Cardiac septum (tissue), 1 donor: ENCODE measurements at regions of chr4 and their contacts with region 1.

Region 1: GRCh38 chr4:123340381-123340701 is 56.3 kb upstream of the SPRY1 start:
- DNase-seq: no peak

Region 2: DNA sequence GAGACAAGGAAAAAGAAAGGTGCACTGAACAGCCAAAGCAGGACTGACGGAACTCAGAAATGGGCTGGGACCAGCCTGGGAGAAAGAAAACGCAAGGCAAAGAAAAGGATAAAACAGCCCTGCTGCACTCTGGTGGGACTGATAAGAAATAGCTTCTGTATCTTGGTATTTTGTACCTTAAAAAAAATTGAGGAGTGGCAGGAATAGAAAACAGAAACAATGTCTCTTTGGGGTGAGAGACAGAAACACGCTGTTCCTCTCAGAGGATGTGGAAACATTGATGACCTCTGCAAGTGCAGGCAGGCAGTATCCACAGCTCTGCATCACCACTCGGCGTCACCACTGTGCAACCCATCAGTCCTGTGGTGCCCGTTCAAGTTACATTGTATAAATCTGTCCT is 96.2 kb before region 1 on chr4:
- intact Hi-C with region 1: loop called (anchors 5 kb)
- DNase-seq: peak; percentile 81

Region 3: DNA sequence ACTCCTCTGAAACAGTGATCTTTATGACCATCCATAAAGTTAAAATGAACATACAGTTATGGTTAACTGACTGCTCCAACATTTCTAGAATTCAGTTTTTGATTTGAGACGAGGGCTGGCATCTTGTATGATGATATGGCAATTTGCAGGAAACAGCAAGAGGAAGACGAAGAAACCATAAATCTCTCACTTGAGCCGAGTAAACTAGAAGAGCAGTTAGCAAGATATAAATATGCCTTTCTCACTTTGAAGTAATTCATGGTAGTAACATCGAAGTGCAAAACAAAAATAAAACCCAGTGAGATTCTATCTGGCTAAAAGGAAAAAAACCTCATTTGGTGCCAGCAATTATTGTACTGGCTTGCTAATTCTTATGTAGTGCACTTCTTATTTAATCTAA is 82.8 kb before region 1 on chr4:
- intact Hi-C with region 1: no loop called
- DNase-seq: no peak

Region 4: DNA sequence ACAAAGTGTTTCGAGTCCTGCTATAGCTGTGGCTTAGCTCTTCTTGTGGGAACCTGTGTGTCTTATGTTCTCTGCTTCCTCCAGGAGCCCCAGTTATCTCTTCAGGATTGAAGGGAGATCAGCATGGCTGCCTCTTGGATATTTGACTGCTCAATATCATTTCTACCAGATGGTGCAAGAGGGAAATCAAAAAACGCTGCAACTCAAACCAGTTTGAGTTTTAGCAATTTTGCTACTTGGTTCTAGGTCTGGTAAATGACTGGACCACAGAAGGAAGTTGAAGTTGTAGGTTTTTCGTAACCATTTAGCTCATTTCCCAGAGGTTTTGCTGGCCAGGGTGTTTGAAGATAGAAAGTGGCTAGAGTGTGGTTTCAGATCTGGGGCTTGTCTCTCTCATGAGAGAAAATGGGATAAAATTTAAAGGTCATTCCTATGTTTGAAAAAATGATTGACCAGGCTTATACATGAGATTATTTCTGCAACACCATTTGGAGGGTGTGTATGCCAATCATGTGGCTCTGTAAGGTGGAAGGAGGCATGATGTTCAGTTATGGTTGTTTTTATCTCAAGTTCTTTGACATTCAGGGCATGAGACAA is 266.7 kb after region 1 on chr4:
- intact Hi-C with region 1: no loop called
- DNase-seq: no peak